ENCODE measurements at regions of chr10 and their contacts with region 1.

Region 1: DNA sequence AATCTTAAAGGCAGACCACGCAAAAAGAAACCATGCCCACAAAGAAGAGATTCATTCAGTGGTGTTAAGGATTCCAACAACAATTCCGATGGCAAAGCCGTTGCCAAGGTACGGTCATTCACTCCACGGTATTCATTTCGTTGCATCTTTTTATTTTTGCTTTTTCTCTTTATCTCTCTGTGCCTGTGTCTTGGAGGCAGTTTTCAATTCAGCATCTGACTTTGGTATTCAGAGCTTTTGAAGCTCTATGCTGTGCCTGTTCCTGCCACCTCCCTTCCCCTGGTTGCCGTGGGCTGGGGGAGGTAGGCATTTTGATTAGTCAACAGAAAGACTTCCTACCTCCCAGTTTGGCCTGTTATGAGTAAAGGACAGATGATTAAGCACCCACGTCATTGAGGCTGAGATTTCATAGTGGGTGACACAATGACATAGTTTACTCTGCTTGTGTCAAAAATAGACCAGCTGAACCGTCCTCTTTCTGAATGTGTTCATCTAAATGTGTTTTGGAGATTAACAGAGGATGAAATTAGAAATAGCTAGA is 149.5 kb downstream of the ARID5B start:
- DNase-seq: peak; percentile 67
- ATAC-seq: peak; percentile 57
- H3K4me3 ChIP-seq: peak overlapping the region; percentile 68
- H3K27ac ChIP-seq: peak overlapping the region; percentile 93
- H3K4me1 ChIP-seq: peaks cover 59% of the 10 kb centered on the region
- H3K27me3 ChIP-seq: no peaks in the 10 kb centered on the region
- CTCF ChIP-seq: no peak
- EP300 ChIP-seq: peak; percentile 91; a peak in 3 of 4 replicates
- POLR2A ChIP-seq: peak; percentile 45; the same call in 1 of the 2 replicates
- RAD21 ChIP-seq: no peak

Region 2: DNA sequence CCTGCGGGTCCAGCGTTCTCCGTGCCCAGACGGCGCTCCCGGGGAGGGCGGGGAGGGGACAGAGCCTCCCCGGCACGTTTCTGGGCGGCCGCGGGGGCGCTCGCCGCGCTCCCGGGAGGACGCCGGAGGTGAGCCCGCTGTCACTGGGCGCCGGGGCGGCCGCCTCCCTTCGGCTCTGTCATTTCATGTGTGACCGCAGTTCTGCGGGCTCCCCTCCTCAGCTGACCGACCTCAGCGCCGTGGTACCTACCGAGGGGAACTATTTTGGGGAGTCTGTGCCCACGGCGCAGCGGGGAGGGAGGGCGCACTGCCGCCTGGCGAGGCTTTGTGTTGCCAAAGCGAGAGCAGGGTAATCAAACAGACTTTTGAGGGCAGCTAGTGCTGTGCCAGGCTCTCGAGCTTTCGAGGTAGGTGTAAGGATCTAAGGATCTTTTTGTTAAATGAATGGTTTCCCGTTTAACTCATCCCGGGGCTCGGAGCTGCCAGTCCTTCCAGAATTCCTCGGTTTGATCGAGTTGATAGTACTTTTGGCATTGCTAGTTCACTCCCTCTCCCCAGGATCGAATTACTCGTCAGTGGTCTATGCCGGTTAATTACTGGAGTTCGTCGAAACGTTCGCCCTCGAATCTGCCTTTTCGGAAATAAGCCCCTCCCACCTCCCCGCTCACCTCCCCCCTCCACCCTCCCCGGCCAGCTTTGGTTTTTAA is 147.6 kb before region 1 on chr10:
- CTCF ChIA-PET with region 1: interaction called, 4 read pairs
- POLR2A ChIA-PET with region 1: interaction called, 3 read pairs
- RAD21 ChIA-PET with region 1: interaction called, 8 read pairs
- SMC1A ChIA-PET with region 1: interaction called, 7 read pairs
- in situ Hi-C with region 1: loop called (anchors 5 kb)
- intact Hi-C with region 1: no loop called
- DNase-seq: peak; percentile 53
- ATAC-seq: peak; percentile 65
- H3K4me3 ChIP-seq: peak overlapping the region; percentile 85
- H3K27ac ChIP-seq: peak overlapping the region; percentile 96
- H3K4me1 ChIP-seq: peaks cover 20% of the 10 kb centered on the region
- H3K27me3 ChIP-seq: no peaks in the 10 kb centered on the region
- CTCF ChIP-seq: peak; percentile 0 to 17 (median 12); a peak in 3 of 6 replicates
- EP300 ChIP-seq: peak; percentile 48 to 69; a peak in 2 of 4 replicates
- POLR2A ChIP-seq: peak; percentile 76
- RAD21 ChIP-seq: no peak

Region 3: GRCh38 chr10:61987951-61988379 is 63.0 kb before region 1 on chr10:
- CTCF ChIA-PET with region 1: no interaction called
- POLR2A ChIA-PET with region 1: no interaction called
- RAD21 ChIA-PET with region 1: no interaction called
- SMC1A ChIA-PET with region 1: interaction called, 6 read pairs
- in situ Hi-C with region 1: no loop called
- intact Hi-C with region 1: loop called (anchors 5 kb)
- DNase-seq: peak; percentile 97
- ATAC-seq: peak; percentile 94
- H3K4me3 ChIP-seq: peak overlapping the region; percentile 36
- H3K27ac ChIP-seq: peak overlapping the region; percentile 98
- H3K4me1 ChIP-seq: peaks cover 45% of the 10 kb centered on the region
- H3K27me3 ChIP-seq: no peaks in the 10 kb centered on the region
- CTCF ChIP-seq: no peak
- EP300 ChIP-seq: peak; percentile 96 to 98
- POLR2A ChIP-seq: peak; percentile 48
- RAD21 ChIP-seq: no peak

Region 4: DNA sequence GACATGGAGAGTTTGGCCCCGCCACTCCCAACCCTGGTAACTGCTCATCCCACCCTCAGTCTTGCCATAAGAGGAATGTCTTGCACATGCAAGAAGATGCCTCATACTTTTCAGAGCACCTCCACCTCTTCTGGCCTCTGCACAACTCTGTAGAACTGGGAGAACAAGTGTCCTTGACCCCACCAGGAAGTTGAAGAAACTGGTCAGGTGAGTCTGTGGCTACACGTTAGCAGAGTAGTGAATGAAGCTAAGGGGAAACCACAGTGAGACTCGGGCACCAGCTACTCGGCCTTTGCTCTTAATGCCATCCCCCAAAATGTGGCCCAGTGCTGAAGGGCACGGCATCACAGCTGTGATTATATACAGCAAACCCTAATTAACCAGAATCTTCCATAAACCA is 39.4 kb before region 1 on chr10:
- CTCF ChIA-PET with region 1: no interaction called
- POLR2A ChIA-PET with region 1: no interaction called
- RAD21 ChIA-PET with region 1: no interaction called
- SMC1A ChIA-PET with region 1: no interaction called
- in situ Hi-C with region 1: no loop called
- intact Hi-C with region 1: no loop called
- DNase-seq: no peak
- ATAC-seq: peak; percentile 37; the same call in 2 of the 3 replicates
- H3K4me3 ChIP-seq: no peak overlapping the region
- H3K27ac ChIP-seq: no peak overlapping the region
- H3K4me1 ChIP-seq: peaks cover 5% of the 10 kb centered on the region
- H3K27me3 ChIP-seq: no peaks in the 10 kb centered on the region
- CTCF ChIP-seq: no peak
- EP300 ChIP-seq: no peak
- POLR2A ChIP-seq: no peak
- RAD21 ChIP-seq: no peak

Region 5: DNA sequence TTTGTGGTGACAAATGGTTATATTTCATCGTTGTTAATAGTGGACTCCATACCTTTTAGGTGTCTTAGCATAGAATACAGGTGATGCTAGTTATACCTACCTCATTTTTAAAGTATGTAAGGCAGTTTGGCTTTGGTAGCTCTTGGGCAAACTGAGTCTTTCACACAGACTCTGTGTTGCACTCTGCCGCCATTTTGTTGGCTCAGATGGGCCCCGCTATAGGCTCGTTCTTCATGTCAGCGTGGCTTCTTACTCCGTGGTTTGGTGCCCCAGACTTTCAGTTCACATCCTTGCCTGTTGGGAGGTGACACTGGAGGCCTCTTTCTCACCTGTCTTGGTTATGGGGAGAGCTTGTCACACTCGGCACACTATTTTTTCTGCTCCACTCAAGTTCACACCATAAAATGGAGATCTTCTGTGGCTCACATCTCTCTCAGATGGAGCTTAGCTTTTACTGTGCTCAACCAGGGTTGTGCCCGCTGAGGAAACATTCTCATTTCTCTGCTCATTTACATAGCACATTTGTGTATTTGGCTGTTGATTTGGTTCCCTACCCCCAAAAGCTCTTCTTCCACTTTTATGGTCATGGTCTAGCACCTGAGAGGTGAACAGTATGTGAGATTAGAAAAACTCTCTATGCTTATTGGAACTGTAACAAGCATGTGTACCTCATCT is 29.1 kb after region 1 on chr10:
- CTCF ChIA-PET with region 1: no interaction called
- POLR2A ChIA-PET with region 1: no interaction called
- RAD21 ChIA-PET with region 1: interaction called, 5 read pairs
- SMC1A ChIA-PET with region 1: interaction called, 6 read pairs
- in situ Hi-C with region 1: no loop called
- intact Hi-C with region 1: loop called (anchors 2 kb)
- DNase-seq: peak; percentile 69
- ATAC-seq: peak; percentile 57
- H3K4me3 ChIP-seq: peak overlapping the region; percentile 12; the same call in 1 of the 2 replicates
- H3K27ac ChIP-seq: peak overlapping the region; percentile 74
- H3K4me1 ChIP-seq: peaks cover 47% of the 10 kb centered on the region
- H3K27me3 ChIP-seq: no peaks in the 10 kb centered on the region
- CTCF ChIP-seq: no peak
- EP300 ChIP-seq: no peak
- POLR2A ChIP-seq: peak; percentile 74
- RAD21 ChIP-seq: no peak

Region 6: DNA sequence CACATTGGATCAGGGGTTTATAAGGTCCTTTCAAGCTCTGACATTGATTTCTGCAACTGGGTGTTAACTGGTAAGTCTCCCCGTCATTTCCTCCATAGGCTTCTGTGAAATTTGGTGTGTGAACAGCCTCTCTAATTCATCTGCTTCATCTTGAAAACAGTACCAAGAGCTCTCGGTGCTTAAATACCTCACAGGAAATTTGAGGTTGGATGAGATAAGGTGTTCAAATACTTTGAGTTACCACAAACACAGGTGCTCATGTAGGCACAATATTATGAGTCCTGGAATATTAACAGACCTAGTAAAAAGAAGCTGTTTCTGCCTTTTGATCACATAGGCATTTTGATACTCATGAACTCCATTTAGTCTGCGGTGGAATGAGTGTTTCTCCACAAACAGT is 132.5 kb after region 1 on chr10:
- CTCF ChIA-PET with region 1: no interaction called
- POLR2A ChIA-PET with region 1: no interaction called
- RAD21 ChIA-PET with region 1: no interaction called
- SMC1A ChIA-PET with region 1: no interaction called
- in situ Hi-C with region 1: no loop called
- intact Hi-C with region 1: loop called (anchors 5 kb)
- DNase-seq: peak; percentile 50
- ATAC-seq: peak; percentile 90
- H3K4me3 ChIP-seq: no peak overlapping the region
- H3K27ac ChIP-seq: no peak overlapping the region
- H3K4me1 ChIP-seq: peaks cover 7% of the 10 kb centered on the region
- H3K27me3 ChIP-seq: no peaks in the 10 kb centered on the region
- CTCF ChIP-seq: no peak
- EP300 ChIP-seq: peak in 1 of 2 experiments; percentile 37; a peak in 1 of 4 replicates
- POLR2A ChIP-seq: no peak
- RAD21 ChIP-seq: no peak

Measured in GM12878 (cell line).